ENCODE measurements at regions of chr10 and their contacts with region 1.

Region 1: GRCh38 chr10:132223156-132223590 is 36.4 kb downstream of the DPYSL4 start:
- DNase-seq: peak; percentile 21 to 73 (median 61)
- ATAC-seq: peak; percentile 91
- H3K4me3 ChIP-seq: no peak overlapping the region
- H3K4me3 Mint-ChIP-seq: no peak overlapping the region
- H3K27ac ChIP-seq: no peak overlapping the region
- H3K27ac Mint-ChIP-seq: no peak overlapping the region
- H3K4me1 ChIP-seq: no peaks in the 10 kb centered on the region
- H3K4me1 Mint-ChIP-seq: peaks cover 1% of the 10 kb centered on the region
- H3K27me3 ChIP-seq: no peaks in the 10 kb centered on the region
- H3K27me3 Mint-ChIP-seq: no peaks in the 10 kb centered on the region
- CTCF ChIP-seq: peak; percentile 46

Region 2: GRCh38 chr10:131697476-131698128 is 525.6 kb before region 1 on chr10:
- CTCF ChIA-PET with region 1: no interaction called
- POLR2A ChIA-PET with region 1: no interaction called
- intact Hi-C with region 1: no loop called
- DNase-seq: peak in 1 of 9 experiments; percentile 11
- ATAC-seq: no peak
- H3K4me3 ChIP-seq: no peak overlapping the region
- H3K4me3 Mint-ChIP-seq: no peak overlapping the region
- H3K27ac ChIP-seq: no peak overlapping the region
- H3K27ac Mint-ChIP-seq: no peak overlapping the region
- H3K4me1 ChIP-seq: no peaks in the 10 kb centered on the region
- H3K4me1 Mint-ChIP-seq: no peaks in the 10 kb centered on the region
- H3K27me3 ChIP-seq: no peaks in the 10 kb centered on the region
- H3K27me3 Mint-ChIP-seq: peaks cover 2% of the 10 kb centered on the region
- CTCF ChIP-seq: no peak

Region 3: DNA sequence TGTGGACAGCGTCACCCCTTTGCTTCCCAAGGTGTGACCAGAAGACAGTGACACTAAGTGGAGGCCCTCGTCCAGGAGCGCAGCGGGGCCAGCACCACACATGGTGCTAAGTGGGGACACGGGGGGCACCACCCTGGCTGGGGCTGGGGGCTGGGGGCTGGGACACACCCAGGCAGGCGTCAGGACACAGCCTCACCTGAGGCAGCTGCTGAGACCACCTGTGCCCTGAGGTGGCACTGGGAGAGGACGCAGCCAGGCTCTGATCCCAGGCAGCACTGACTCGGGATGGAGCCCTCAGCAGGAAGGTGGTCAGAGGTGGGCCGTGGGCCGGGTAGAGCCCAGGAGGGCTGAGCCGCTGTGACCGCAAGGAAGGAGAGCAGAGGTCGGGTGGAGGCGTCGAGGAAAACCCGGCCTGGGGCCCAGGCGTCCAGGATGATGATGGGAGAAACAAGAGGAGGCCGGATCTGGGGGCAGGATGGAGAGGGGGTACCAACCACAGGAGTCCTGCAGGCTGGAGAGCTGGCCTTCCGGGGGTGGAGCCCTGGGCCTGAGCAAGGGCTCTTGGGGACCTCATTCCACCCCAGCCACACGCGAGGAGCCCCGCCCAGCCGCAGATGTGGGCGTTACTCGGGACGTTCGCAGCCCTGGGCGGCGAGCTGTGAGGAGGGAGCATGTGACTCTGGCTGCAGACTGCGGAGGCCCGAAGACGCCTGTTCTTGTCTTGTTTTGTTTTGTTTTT is 131.4 kb after region 1 on chr10:
- CTCF ChIA-PET with region 1: interaction called, 9 read pairs
- POLR2A ChIA-PET with region 1: no interaction called
- intact Hi-C with region 1: loop called in 1 of 2 experiments (anchors 1 kb)
- DNase-seq: no peak
- ATAC-seq: no peak
- H3K4me3 ChIP-seq: no peak overlapping the region
- H3K4me3 Mint-ChIP-seq: no peak overlapping the region
- H3K27ac ChIP-seq: no peak overlapping the region
- H3K27ac Mint-ChIP-seq: no peak overlapping the region
- H3K4me1 ChIP-seq: peaks cover 3% of the 10 kb centered on the region
- H3K4me1 Mint-ChIP-seq: peaks cover 5% of the 10 kb centered on the region
- H3K27me3 ChIP-seq: no peaks in the 10 kb centered on the region
- H3K27me3 Mint-ChIP-seq: no peaks in the 10 kb centered on the region
- CTCF ChIP-seq: no peak